Heart right ventricle (tissue), 16 donors: ENCODE measurements at regions of chr15 and their contacts with region 1.

Region 1: DNA sequence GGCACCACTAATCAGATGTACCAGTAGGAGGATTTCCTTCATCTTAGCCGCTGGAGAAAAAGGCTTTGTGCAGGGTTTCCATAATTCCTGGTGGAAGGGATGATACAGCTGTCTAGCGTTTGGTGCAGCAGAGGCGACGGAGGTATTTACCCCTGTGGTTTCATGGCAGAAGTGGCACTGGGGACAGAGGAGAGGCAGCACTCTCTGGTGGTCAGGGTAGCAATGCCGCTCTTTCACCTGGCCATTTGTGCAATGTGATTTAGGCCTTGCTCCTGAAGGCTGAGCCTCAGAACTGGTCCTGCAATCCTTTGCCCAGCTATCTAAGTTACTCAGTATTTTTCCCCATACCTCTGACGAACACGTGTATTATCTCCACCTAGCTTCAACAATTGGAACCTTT is 47.1 kb upstream of the BNIP2 start:
- DNase-seq: no peak
- ATAC-seq: no peak
- H3K4me3 ChIP-seq: no peak overlapping the region
- H3K27ac ChIP-seq: no peak overlapping the region
- H3K4me1 ChIP-seq: no peaks in the 10 kb centered on the region
- H3K27me3 ChIP-seq: peaks cover 0 to 30% (median 13%) of the 10 kb centered on the region in 7 donors
- CTCF ChIP-seq: peak in 1 of 9 donors; percentile 25

Region 2: DNA sequence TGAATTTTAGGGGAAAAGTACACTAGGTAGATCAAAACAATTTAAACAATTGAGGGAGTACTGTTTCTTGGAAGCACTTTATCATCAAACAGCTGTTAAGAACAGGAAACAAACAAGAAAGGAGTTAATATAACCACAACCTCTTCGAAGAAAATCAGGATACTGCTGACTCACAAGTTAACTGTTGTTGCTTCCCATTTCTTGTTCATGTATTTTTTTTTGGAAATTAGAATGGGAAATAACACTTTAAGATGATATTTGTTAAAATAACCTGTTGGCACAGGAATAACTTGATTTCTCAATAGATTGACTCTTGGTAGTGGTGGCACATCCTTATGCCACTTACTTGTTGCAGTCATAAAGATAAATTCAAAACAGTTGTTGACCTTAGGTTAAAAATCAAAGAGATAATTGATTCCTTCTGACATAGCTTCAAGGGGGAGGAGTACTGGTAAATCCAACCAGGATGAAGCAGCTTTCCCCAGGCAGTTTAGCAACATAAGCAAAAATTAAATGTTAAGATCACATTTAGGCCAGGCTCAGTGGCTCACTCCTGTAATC is 50.4 kb before region 1 on chr15:
- intact Hi-C with region 1: no loop called
- DNase-seq: no peak
- ATAC-seq: no peak
- H3K4me3 ChIP-seq: peak overlapping the region in 1 of 10 donors; percentile 95
- H3K27ac ChIP-seq: peak overlapping the region in 5 of 10 donors; percentile 4 to 99 (median 17)
- H3K4me1 ChIP-seq: peaks cover 0 to 55% (median 38%) of the 10 kb centered on the region in 9 donors
- H3K27me3 ChIP-seq: no peaks in the 10 kb centered on the region
- CTCF ChIP-seq: no peak

Region 3: DNA sequence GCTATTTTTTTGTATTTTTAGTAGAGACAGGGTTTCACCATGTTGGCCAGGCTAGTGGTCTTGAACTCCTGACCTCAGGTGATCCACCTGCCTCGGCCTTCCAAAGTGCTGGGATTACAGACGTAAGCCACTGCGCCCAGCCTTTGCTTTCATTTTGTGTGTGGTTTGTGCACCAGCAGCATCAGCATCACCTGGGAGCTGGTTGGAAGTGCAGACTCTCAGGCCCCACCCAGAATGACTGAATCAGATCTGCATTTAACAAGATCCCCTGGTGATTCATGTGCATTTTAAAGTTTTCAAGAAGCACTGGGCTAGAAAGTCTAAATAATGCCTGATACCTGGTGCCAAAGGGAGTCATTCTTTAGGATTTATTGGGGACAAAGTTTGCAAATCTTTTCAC is 26.4 kb after region 1 on chr15:
- intact Hi-C with region 1: loop called in 1 of 10 experiments (anchors 1 kb)
- DNase-seq: no peak
- ATAC-seq: no peak
- H3K4me3 ChIP-seq: no peak overlapping the region
- H3K27ac ChIP-seq: no peak overlapping the region
- H3K4me1 ChIP-seq: no peaks in the 10 kb centered on the region
- H3K27me3 ChIP-seq: peaks cover 0 to 67% (median 24%) of the 10 kb centered on the region in 7 donors
- CTCF ChIP-seq: no peak